Uterus (tissue), 4 donors: ENCODE measurements at regions of chr7 and their contacts with region 1.

Region 1: DNA sequence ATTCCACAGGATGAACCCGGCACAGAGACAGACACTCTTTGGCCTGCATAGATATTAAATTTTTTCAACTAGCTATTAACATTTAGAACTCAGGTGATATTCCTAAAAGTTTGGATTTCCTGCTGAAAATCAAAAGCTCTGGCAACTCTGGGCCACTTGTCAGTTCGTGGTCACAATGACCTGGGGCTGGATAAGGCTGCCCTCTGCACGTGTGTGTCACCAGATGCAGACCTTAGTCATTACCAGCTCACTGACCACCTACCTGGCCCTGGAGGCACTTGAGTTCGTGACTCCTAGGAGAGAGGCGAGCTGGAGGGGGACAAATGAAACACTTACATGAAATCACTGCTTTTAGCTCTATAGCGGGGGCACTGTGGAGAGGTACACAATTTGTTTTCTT is 126.5 kb downstream of the HIPK2 start:
- DNase-seq: no peak
- H3K4me3 ChIP-seq: no peak overlapping the region
- H3K27ac ChIP-seq: no peak overlapping the region
- H3K4me1 ChIP-seq: no peaks in the 10 kb centered on the region
- H3K27me3 ChIP-seq: no peaks in the 10 kb centered on the region
- CTCF ChIP-seq: no peak
- POLR2A ChIP-seq: no peak

Region 2: DNA sequence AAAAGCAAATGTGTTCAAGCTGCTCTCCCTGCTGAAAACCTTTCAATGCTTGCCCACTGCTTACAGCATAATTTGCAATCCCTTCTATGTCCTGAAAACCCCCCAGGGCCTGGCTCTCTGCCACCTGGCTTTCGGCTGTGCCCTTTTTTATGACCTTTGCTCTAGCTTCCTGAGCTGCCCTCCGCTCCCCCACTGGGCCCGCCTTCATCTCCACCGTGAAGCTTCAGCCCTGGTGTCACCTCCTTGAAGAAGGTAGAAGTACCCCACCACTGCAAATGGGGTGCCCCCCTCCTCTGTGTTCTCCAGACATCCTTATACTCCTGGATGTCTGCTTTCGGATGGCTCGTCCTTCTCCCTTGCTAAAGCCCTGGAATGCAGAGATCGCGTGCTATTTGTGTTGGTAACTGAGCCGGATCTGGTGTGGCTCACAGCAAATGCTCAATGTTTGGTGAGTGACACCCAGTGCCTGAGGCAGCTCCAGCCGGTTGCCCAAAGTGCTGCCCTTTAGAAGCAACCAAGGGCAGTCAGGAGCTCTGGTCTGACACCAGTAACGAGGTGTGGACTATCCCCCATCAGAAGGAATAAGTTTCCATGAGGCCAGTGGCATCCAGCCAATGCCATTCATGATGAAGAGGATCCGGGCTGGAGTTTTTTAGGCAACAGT is 760.4 kb before region 1 on chr7:
- intact Hi-C with region 1: no loop called
- DNase-seq: peak; percentile 38 to 48
- H3K4me3 ChIP-seq: no peak overlapping the region
- H3K27ac ChIP-seq: peak overlapping the region; percentile 18 to 53
- H3K4me1 ChIP-seq: peaks cover 0 to 4% of the 10 kb centered on the region in 2 donors
- H3K27me3 ChIP-seq: no peaks in the 10 kb centered on the region
- CTCF ChIP-seq: no peak
- POLR2A ChIP-seq: no peak

Region 3: GRCh38 chr7:139777948-139778841 is 126.9 kb after region 1 on chr7 and contains the start of gene HIPK2:
- intact Hi-C with region 1: loop called (anchors 10 kb)
- DNase-seq: peak; percentile 75 to 80
- H3K4me3 ChIP-seq: peak within 1 kb of the TSS; percentile 71 to 90
- H3K27ac ChIP-seq: peak within 1 kb of the TSS; percentile 99
- H3K4me1 ChIP-seq: no peaks in the 10 kb centered on the region
- H3K27me3 ChIP-seq: no peaks in the 10 kb centered on the region
- CTCF ChIP-seq: no peak
- POLR2A ChIP-seq: peak; percentile 9 to 30
- total RNA-seq, gene HIPK2: 9.4 to 65.8 (median 19.2) TPM

Region 4: DNA sequence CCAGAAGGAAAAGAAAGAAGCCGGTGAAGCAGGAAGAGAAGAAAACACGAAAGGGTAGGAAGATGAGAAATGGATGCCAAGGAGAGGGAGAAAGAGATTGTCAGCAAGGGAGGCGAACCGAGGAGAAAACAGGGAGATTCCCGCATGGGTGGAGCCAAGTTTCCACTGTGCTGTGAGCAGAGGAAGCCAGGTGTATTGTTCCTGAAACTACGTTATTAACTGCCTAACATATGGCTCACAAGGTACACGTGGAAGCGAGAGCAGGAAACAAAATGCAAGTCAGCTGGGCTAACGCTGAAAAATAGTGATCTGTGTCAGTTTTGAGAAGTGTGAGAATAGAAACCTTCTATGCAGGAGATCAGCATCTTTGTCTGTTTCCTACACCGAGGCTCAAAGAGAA is 146.9 kb after region 1 on chr7:
- intact Hi-C with region 1: no loop called
- DNase-seq: no peak
- H3K4me3 ChIP-seq: no peak overlapping the region
- H3K27ac ChIP-seq: no peak overlapping the region
- H3K4me1 ChIP-seq: no peaks in the 10 kb centered on the region
- H3K27me3 ChIP-seq: no peaks in the 10 kb centered on the region
- CTCF ChIP-seq: no peak
- POLR2A ChIP-seq: no peak